Sigmoid colon (tissue), 7 donors: ENCODE measurements at regions of chr2 and their contacts with region 1.

Region 1: GRCh38 chr2:67322353-67323001 is 74.7 kb upstream of the ETAA1 start:
- DNase-seq: peak; percentile 81
- H3K4me3 ChIP-seq: no peak overlapping the region
- H3K27ac ChIP-seq: peak overlapping the region; percentile 7 to 77 (median 73)
- H3K4me1 ChIP-seq: peaks cover 0 to 65% (median 51%) of the 10 kb centered on the region in 4 donors
- H3K27me3 ChIP-seq: no peaks in the 10 kb centered on the region
- CTCF ChIP-seq: peak; percentile 31 to 51 (median 38)
- EP300 ChIP-seq: no peak
- POLR2A ChIP-seq: no peak

Region 2: DNA sequence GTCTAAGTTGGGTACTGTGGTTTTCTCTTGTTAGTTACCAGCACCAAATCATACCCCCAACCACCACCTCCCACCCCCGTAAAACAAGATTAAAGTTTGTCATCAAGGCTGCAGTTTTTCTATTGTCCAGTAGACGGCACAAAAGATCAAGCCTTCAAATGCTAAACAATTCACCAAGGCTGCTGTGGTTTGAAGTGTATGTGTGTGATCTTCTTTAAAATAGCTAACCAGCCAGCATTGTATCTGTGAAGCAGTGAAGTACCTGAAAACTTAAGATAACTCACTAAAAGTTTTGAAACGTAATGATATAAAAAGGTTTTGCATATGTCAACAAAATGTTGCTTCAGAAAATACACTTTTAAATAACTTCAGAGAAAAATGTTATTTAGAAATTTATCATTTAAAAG is 893.4 kb before region 1 on chr2:
- intact Hi-C with region 1: loop called (anchors 5 kb)
- DNase-seq: no peak
- H3K4me3 ChIP-seq: no peak overlapping the region
- H3K27ac ChIP-seq: peak overlapping the region; percentile 47 to 99 (median 95)
- H3K4me1 ChIP-seq: peaks cover 0 to 51% (median 38%) of the 10 kb centered on the region in 4 donors
- H3K27me3 ChIP-seq: peaks cover 0 to 7% (median 0%) of the 10 kb centered on the region in 3 donors
- CTCF ChIP-seq: peak; percentile 85 to 95 (median 91)
- EP300 ChIP-seq: no peak
- POLR2A ChIP-seq: no peak

Region 3: GRCh38 chr2:66699793-66700676 is 622.4 kb before region 1 on chr2:
- intact Hi-C with region 1: loop called (anchors 5 kb)
- DNase-seq: no peak
- H3K4me3 ChIP-seq: no peak overlapping the region
- H3K27ac ChIP-seq: peak overlapping the region; percentile 76 to 91 (median 85)
- H3K4me1 ChIP-seq: peaks cover 3 to 74% (median 65%) of the 10 kb centered on the region in 4 donors
- H3K27me3 ChIP-seq: no peaks in the 10 kb centered on the region
- CTCF ChIP-seq: no peak
- EP300 ChIP-seq: no peak
- POLR2A ChIP-seq: no peak

Region 4: DNA sequence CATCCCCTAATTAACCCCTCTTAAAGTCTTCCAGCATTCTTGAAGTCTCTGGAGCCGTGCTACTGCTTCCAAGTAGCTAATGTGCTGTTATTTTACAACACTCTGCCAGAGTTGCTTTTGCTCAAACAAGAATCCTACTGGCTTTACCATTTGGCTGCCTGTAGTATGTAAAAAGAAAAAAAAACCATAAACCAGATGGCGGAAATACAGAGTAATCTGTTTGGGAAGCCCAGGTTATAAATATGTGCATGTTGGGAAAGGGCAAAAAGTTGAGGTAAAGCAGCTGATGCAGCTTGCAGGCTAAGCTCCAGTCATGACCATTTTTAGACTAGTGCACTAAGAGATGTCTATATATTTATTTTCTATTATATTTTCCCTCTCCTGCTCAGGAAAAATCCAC is 238.5 kb before region 1 on chr2:
- intact Hi-C with region 1: loop called (anchors 10 kb)
- DNase-seq: no peak
- H3K4me3 ChIP-seq: no peak overlapping the region
- H3K27ac ChIP-seq: peak overlapping the region in 3 of 4 donors; percentile 54 to 79 (median 77)
- H3K4me1 ChIP-seq: peaks cover 0 to 57% (median 37%) of the 10 kb centered on the region in 4 donors
- H3K27me3 ChIP-seq: no peaks in the 10 kb centered on the region
- CTCF ChIP-seq: no peak
- EP300 ChIP-seq: peak in 3 of 4 donors; percentile 36 to 72 (median 69)
- POLR2A ChIP-seq: no peak

Region 5: GRCh38 chr2:67374481-67374880 is 52.0 kb after region 1 on chr2:
- intact Hi-C with region 1: no loop called
- DNase-seq: no peak
- H3K4me3 ChIP-seq: peak overlapping the region in 2 of 4 donors; percentile 2 to 17
- H3K27ac ChIP-seq: no peak overlapping the region
- H3K4me1 ChIP-seq: peaks cover 0 to 15% (median 10%) of the 10 kb centered on the region in 4 donors
- H3K27me3 ChIP-seq: no peaks in the 10 kb centered on the region
- CTCF ChIP-seq: no peak
- EP300 ChIP-seq: no peak
- POLR2A ChIP-seq: no peak

Region 6: GRCh38 chr2:67650291-67651133 is 328.0 kb after region 1 on chr2:
- intact Hi-C with region 1: loop called (anchors 5 kb)
- DNase-seq: peak; percentile 96
- H3K4me3 ChIP-seq: peak overlapping the region in 1 of 4 donors; percentile 1
- H3K27ac ChIP-seq: peak overlapping the region; percentile 72 to 91 (median 83)
- H3K4me1 ChIP-seq: peaks cover 0 to 41% (median 32%) of the 10 kb centered on the region in 4 donors
- H3K27me3 ChIP-seq: no peaks in the 10 kb centered on the region
- CTCF ChIP-seq: peak; percentile 55 to 77 (median 66)
- EP300 ChIP-seq: peak in 3 of 4 donors; percentile 11 to 72 (median 63)
- POLR2A ChIP-seq: no peak